Dendritic cell treated with granulocyte-macrophage colony-stimulating factor and Interleukin-4, amounts not matched to agents 40 ng/mL and 50 ng/mL, for 4 days (primary cell): ENCODE measurements at regions of chr3 and their contacts with region 1.

Region 1: GRCh38 chr3:179473565-179473964 is 22.3 kb upstream of the GNB4 start:
- H3K4me3 Mint-ChIP-seq: no peak overlapping the region
- H3K27ac Mint-ChIP-seq: peak overlapping the region; percentile 73
- H3K4me1 Mint-ChIP-seq: peaks cover 25% of the 10 kb centered on the region
- H3K27me3 Mint-ChIP-seq: no peaks in the 10 kb centered on the region

Region 2: GRCh38 chr3:179451265-179452175 is 22.0 kb before region 1 on chr3 and contains the start of gene GNB4:
- intact Hi-C with region 1: loop called (anchors 1 kb)
- H3K4me3 Mint-ChIP-seq: peak within 1 kb of the TSS; percentile 83
- H3K27ac Mint-ChIP-seq: peak within 1 kb of the TSS; percentile 89
- H3K4me1 Mint-ChIP-seq: peaks cover 53% of the 10 kb centered on the region
- H3K27me3 Mint-ChIP-seq: no peaks in the 10 kb centered on the region